Activated CD8-positive, alpha-beta T cell treated with anti-CD3 and anti-CD28 coated beads, Interleukin-2, amount 10 ng/mL, durations not matched to agents 7 days and 5 days (primary cell): ENCODE measurements at regions of chr19 and their contacts with region 1.

Region 1: DNA sequence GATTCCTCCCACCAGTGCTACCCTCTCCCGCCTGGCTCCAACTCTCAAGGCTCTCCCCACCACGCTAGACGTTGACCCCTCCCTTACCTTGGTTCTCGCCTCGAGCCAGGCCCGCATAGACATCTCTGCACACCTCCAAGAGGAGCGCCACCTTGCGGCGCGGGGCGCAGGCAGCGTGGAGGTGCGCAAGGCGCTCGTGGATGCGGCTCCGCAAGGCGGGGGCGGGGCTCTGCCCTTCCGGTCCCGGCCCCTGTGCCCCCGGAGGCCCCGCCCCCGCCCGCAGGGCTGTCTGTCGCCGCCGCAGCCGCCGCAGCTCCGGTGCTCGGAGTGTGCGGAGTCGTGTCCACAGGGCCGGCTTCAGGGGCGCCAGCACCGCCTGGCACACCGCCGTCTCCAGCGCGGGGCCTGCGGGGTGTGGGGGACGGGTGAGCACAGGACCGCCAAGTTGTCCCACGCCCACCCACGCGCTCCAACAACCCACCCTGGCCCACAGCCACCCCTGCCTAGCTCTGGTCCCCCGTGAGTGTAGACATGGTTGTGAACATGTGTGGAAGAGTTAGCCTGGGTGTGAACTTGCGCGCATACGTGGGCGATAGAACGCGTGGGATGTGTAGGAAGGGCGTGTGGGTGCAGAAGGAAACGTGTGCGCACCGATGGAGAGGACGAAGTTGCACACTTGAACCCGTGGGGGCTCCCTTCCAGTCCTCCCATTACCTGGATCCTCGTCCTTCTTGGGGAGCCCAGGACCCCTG is 8.0 kb downstream of the RINL start:
- DNase-seq: peak; percentile 94
- ATAC-seq: peak; percentile 94
- H3K4me3 Mint-ChIP-seq: peak overlapping the region; percentile 79
- H3K27ac Mint-ChIP-seq: peak overlapping the region; percentile 86
- H3K4me1 Mint-ChIP-seq: peaks cover 54% of the 10 kb centered on the region
- H3K27me3 Mint-ChIP-seq: no peaks in the 10 kb centered on the region

Region 2: DNA sequence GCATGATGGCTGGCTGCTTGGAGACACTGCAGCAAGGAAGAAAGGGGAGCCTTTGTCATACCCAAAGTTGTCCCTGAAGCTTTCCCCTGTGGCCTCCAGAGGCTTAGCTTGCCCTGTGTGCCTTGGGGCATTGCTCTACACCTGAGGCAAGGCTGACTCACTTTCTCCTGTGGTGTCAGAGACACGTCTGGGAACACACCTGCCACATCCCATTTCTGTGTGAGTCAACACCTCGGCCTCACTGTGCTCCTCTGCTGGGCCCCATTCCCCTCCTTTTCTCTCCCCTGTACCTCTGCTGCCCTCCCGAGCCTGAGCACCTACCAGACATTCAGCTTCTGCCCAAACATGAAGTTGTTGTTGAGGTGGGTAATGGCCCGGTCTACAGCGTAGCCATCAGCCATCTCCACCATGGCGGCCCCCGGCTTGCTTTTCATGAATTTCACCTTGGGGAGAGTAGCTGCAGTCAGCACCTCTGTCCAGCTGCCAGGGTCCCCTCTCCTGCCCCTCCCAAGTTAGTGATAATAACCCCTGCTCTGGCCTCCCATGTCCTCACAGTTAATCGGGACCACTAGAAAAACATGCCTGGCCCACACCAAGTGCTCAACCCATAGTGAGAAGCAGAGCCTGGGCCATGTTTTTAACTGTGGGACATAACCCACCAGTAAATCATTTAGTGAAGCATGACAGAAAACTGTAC is 31.3 kb before region 1 on chr19:
- CTCF ChIA-PET with region 1: interaction called, 15 read pairs
- POLR2A ChIA-PET with region 1: interaction called, 8 read pairs
- DNase-seq: peak; percentile 28
- ATAC-seq: no peak
- H3K4me3 Mint-ChIP-seq: no peak overlapping the region
- H3K27ac Mint-ChIP-seq: peak overlapping the region; percentile 55
- H3K4me1 Mint-ChIP-seq: peaks cover 55% of the 10 kb centered on the region
- H3K27me3 Mint-ChIP-seq: no peaks in the 10 kb centered on the region

Region 3: GRCh38 chr19:38856813-38857212 is 13.2 kb before region 1 on chr19:
- CTCF ChIA-PET with region 1: interaction called, 17 read pairs
- POLR2A ChIA-PET with region 1: interaction called, 10 read pairs
- DNase-seq: no peak
- ATAC-seq: no peak
- H3K4me3 Mint-ChIP-seq: peak overlapping the region; percentile 52
- H3K27ac Mint-ChIP-seq: peak overlapping the region; percentile 82
- H3K4me1 Mint-ChIP-seq: peaks cover 39% of the 10 kb centered on the region
- H3K27me3 Mint-ChIP-seq: no peaks in the 10 kb centered on the region